ENCODE measurements at regions of chr9 and their contacts with region 1.

Region 1: GRCh38 chr9:111896353-111896958 is at the start of gene UGCG:
- DNase-seq: peak; percentile 92
- ATAC-seq: peak; percentile 87
- H3K4me3 Mint-ChIP-seq: peak within 1 kb of the TSS; percentile 96
- H3K27ac Mint-ChIP-seq: peak within 1 kb of the TSS; percentile 93
- H3K4me1 Mint-ChIP-seq: peaks cover 16% of the 10 kb centered on the region
- H3K27me3 Mint-ChIP-seq: no peaks in the 10 kb centered on the region
- CTCF ChIP-seq: no peak
- total RNA-seq, gene UGCG: 103 and 111 TPM in 2 replicates

Region 2: DNA sequence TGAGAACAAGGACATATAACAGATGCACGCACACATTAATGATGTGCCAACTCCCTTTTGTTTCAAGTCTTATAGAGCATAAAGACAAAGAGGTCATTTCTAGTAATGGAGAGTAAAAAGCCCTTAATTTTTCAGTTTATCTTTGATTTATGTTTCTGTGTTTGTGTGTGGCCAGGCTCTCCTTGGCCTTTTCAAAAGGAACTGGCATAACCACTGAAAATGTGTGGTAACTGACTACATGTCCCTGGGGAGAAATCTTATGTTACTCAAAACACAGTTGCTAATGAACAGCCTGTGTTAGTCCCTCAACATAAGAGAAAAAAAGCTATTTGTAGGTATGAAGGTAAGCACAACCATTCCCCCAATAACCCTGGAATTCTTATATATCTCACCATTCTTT is 54.1 kb before region 1 on chr9:
- CTCF ChIA-PET with region 1: no interaction called
- POLR2A ChIA-PET with region 1: interaction called, 3 read pairs
- intact Hi-C with region 1: loop called (anchors 5 kb)
- DNase-seq: no peak
- ATAC-seq: peak; percentile 78
- H3K4me3 Mint-ChIP-seq: no peak overlapping the region
- H3K27ac Mint-ChIP-seq: no peak overlapping the region
- H3K4me1 Mint-ChIP-seq: peaks cover 9% of the 10 kb centered on the region
- H3K27me3 Mint-ChIP-seq: peaks cover 7% of the 10 kb centered on the region
- CTCF ChIP-seq: no peak

Region 3: GRCh38 chr9:111926421-111926875 is 30.0 kb after region 1 on chr9:
- CTCF ChIA-PET with region 1: no interaction called
- POLR2A ChIA-PET with region 1: interaction called, 46 read pairs
- intact Hi-C with region 1: loop called (anchors 1 kb)
- DNase-seq: peak; percentile 34
- ATAC-seq: peak; percentile 97
- H3K4me3 Mint-ChIP-seq: peak overlapping the region; percentile 56
- H3K27ac Mint-ChIP-seq: peak overlapping the region; percentile 83
- H3K4me1 Mint-ChIP-seq: peaks cover 48% of the 10 kb centered on the region
- H3K27me3 Mint-ChIP-seq: no peaks in the 10 kb centered on the region
- CTCF ChIP-seq: no peak

Region 4: GRCh38 chr9:111959468-111960359 is 63.3 kb after region 1 on chr9:
- CTCF ChIA-PET with region 1: no interaction called
- POLR2A ChIA-PET with region 1: no interaction called
- intact Hi-C with region 1: no loop called
- DNase-seq: no peak
- ATAC-seq: no peak
- H3K4me3 Mint-ChIP-seq: no peak overlapping the region
- H3K27ac Mint-ChIP-seq: no peak overlapping the region
- H3K4me1 Mint-ChIP-seq: peaks cover 56% of the 10 kb centered on the region
- H3K27me3 Mint-ChIP-seq: no peaks in the 10 kb centered on the region
- CTCF ChIP-seq: no peak

Region 5: GRCh38 chr9:112012026-112012902 is 115.8 kb after region 1 on chr9:
- CTCF ChIA-PET with region 1: no interaction called
- POLR2A ChIA-PET with region 1: interaction called, 28 read pairs
- intact Hi-C with region 1: no loop called
- DNase-seq: no peak
- ATAC-seq: peak; percentile 85
- H3K4me3 Mint-ChIP-seq: peak overlapping the region; percentile 47
- H3K27ac Mint-ChIP-seq: peak overlapping the region; percentile 93
- H3K4me1 Mint-ChIP-seq: peaks cover 84% of the 10 kb centered on the region
- H3K27me3 Mint-ChIP-seq: no peaks in the 10 kb centered on the region
- CTCF ChIP-seq: no peak

Region 6: GRCh38 chr9:112061152-112061740 is 164.8 kb after region 1 on chr9:
- CTCF ChIA-PET with region 1: no interaction called
- POLR2A ChIA-PET with region 1: interaction called, 10 read pairs
- intact Hi-C with region 1: no loop called
- DNase-seq: no peak
- ATAC-seq: peak; percentile 70
- H3K4me3 Mint-ChIP-seq: no peak overlapping the region
- H3K27ac Mint-ChIP-seq: peak overlapping the region; percentile 85
- H3K4me1 Mint-ChIP-seq: peaks cover 67% of the 10 kb centered on the region
- H3K27me3 Mint-ChIP-seq: no peaks in the 10 kb centered on the region
- CTCF ChIP-seq: no peak

Region 7: DNA sequence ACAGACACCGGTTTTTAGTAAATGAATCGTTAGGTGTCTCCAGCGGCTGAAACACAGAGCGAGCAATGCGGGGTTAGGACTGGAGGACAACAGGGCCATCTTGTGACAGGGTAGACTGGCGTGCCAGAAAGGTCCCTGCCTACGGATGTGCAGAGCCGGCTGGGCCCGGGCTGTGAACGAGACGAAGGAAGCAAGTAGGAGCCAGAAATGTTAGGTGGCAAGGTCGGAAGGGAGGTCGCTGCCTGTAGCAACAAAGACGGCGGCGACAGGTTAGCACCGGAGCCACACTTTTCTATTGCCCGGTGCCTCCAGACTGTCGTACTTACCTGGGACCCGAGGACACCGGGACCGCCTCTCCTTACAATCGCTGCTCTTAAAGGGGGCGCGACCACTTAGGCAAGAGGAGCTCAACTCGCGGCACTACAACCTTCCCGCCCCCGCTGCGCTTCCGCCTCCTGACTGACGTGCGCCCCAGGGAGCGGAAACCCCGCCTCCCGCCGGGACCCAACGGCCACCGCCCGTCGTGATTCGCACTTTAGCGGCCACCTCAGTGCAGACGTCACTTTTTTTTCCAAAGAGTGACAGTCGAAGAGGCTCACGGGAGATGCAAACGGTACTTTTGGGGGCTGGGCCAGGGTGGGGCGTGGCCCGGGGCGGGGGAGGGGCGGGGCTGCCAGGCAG is 821.3 kb after region 1 on chr9 and contains the start of gene INIP:
- CTCF ChIA-PET with region 1: no interaction called
- POLR2A ChIA-PET with region 1: interaction called, 4 read pairs
- intact Hi-C with region 1: loop called (anchors 5 kb)
- DNase-seq: peak; percentile 95
- ATAC-seq: peak; percentile 93
- H3K4me3 Mint-ChIP-seq: peak within 1 kb of the TSS; percentile 100
- H3K27ac Mint-ChIP-seq: peak within 1 kb of the TSS; percentile 98
- H3K4me1 Mint-ChIP-seq: peaks cover 19% of the 10 kb centered on the region
- H3K27me3 Mint-ChIP-seq: no peaks in the 10 kb centered on the region
- CTCF ChIP-seq: no peak
- total RNA-seq, gene INIP: 31.1 and 32.1 TPM in 2 replicates

Region 8: GRCh38 chr9:112819635-112820496 is 923.4 kb after region 1 on chr9:
- CTCF ChIA-PET with region 1: no interaction called
- POLR2A ChIA-PET with region 1: no interaction called
- intact Hi-C with region 1: no loop called
- DNase-seq: no peak
- ATAC-seq: peak; percentile 69
- H3K4me3 Mint-ChIP-seq: no peak overlapping the region
- H3K27ac Mint-ChIP-seq: peak overlapping the region; percentile 7
- H3K4me1 Mint-ChIP-seq: peaks cover 23% of the 10 kb centered on the region
- H3K27me3 Mint-ChIP-seq: no peaks in the 10 kb centered on the region
- CTCF ChIP-seq: peak; percentile 83

Region 9: GRCh38 chr9:113350937-113351336 is 1454.5 kb after region 1 on chr9:
- CTCF ChIA-PET with region 1: no interaction called
- POLR2A ChIA-PET with region 1: no interaction called
- intact Hi-C with region 1: no loop called
- DNase-seq: no peak
- ATAC-seq: peak; percentile 49
- H3K4me3 Mint-ChIP-seq: peak overlapping the region; percentile 77
- H3K27ac Mint-ChIP-seq: peak overlapping the region; percentile 7
- H3K4me1 Mint-ChIP-seq: peaks cover 20% of the 10 kb centered on the region
- H3K27me3 Mint-ChIP-seq: peaks cover 7% of the 10 kb centered on the region
- CTCF ChIP-seq: no peak

Region 10: GRCh38 chr9:113410207-113410864 is 1513.9 kb after region 1 on chr9 and contains the starts of genes C9orf43 and POLE3:
- CTCF ChIA-PET with region 1: no interaction called
- POLR2A ChIA-PET with region 1: no interaction called
- intact Hi-C with region 1: loop called (anchors 10 kb)
- DNase-seq: peak; percentile 94
- ATAC-seq: peak; percentile 89
- H3K4me3 Mint-ChIP-seq: peak within 1 kb of the TSS; percentile 98
- H3K27ac Mint-ChIP-seq: peak within 1 kb of the TSS; percentile 99
- H3K4me1 Mint-ChIP-seq: peaks cover 31% of the 10 kb centered on the region
- H3K27me3 Mint-ChIP-seq: no peaks in the 10 kb centered on the region
- CTCF ChIP-seq: no peak
- total RNA-seq, gene C9orf43: 0.76 and 1.2 TPM in 2 replicates
- total RNA-seq, gene POLE3: 48.0 and 55.5 TPM in 2 replicates